Psoas muscle (tissue), 8 donors: ENCODE measurements at regions of chr16 and their contacts with region 1.

Region 1: GRCh38 chr16:27676839-27677238 is 126.9 kb downstream of the KATNIP start:
- DNase-seq: no peak
- ATAC-seq: no peak
- H3K4me3 ChIP-seq: no peak overlapping the region
- H3K27ac ChIP-seq: no peak overlapping the region
- H3K4me1 ChIP-seq: no peaks in the 10 kb centered on the region
- H3K27me3 ChIP-seq: no peaks in the 10 kb centered on the region
- CTCF ChIP-seq: no peak

Region 2: DNA sequence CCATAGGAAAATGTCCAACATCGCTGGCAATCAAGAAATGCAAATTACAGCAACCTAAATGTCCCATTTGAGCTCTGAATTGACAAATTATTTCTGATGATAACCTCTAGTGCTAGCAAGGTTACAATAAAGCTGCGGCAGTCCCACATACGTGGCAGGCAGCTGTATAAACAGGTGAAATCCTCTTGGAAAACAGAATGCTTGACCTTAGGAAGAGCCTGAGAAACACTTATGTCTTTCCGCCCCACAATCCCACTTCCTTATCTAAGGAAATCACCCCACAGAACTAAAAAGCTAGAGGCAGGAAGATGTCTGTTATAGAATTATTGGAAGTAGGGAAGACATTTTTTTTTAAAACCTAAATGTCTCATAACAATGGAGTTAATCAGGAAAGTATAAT is 27.4 kb after region 1 on chr16:
- intact Hi-C with region 1: loop called in 1 of 2 experiments (anchors 2 kb)
- DNase-seq: no peak
- ATAC-seq: no peak
- H3K4me3 ChIP-seq: no peak overlapping the region
- H3K27ac ChIP-seq: no peak overlapping the region
- H3K4me1 ChIP-seq: no peaks in the 10 kb centered on the region
- H3K27me3 ChIP-seq: no peaks in the 10 kb centered on the region
- CTCF ChIP-seq: no peak